Endothelial cell of umbilical vein (primary cell): ENCODE measurements at regions of chr3 and their contacts with region 1.

Region 1: DNA sequence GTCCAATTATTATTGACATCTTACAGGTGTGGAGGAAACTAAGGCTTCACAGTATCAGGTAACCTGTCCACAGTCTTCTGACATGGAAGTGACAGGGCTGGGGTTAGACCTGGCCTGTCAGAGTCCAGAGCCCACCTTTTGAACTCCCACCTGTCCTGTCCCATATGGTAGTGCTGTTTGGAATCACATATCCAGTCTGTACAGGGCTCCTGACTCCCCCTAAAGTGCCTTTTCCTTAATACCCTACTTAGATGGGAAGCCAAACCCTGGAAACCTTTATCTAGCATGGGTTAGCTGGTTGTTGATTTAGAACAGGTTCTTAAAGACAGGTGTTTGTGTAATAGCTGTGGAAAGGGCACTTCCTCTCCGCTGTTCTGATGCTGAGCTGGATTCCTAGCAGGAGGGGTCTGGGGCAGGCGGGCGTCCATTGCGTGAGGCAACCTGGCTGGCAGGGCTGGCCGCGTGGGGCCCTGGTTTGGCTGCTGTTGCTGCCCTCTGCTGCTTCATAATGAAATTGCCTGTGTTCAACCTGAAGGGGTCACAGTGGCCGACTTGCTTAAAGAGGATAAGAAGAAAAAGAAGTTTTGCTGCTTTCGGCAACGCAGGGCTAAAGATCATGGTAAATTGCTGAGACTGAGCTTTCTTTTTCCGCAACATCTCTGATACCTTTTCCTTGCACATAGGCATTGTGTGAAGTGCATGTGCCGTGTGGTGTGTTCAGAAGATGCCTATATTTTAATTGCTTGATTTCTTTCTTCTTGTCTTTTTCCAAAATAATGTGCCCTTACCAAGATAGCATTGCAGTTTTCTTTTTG is 136.2 kb downstream of the CHDH start:
- DNase-seq: peak; percentile 72
- H3K4me3 ChIP-seq: no peak overlapping the region
- H3K27ac ChIP-seq: no peak overlapping the region
- H3K4me1 ChIP-seq: no peaks in the 10 kb centered on the region
- H3K27me3 ChIP-seq: peaks cover 2 to 4% of the 10 kb centered on the region in 2 experiments
- CTCF ChIP-seq: peak; percentile 63 to 82
- POLR2A ChIP-seq: no peak

Region 2: DNA sequence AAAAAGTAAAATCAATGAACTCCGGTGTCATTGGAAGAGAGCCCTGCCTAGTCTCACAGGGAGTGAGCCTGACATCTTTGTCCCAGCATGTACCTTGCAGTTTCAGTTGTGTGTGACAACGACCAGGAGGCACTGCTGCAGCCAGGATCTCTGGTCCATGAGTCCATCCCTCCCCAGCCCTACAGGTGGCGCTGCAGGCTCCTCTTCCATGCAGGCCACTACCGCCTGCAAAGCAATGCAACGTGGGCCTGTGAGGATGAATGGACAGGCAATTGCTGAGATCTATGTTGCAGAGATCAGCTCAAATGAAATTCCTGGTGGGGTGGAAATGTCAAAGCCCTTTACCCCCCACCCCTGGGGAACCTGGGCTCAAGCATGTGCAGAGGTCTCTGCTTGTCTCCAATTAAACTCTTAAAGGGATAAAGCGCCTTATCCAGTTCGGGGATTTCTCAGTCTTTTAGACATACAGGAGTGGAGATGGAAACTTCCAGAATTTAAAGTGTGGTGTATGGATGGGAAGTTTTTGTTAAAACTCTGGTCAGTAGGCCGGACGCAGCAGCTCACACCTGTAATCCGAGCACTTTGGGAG is 490.1 kb before region 1 on chr3:
- CTCF ChIA-PET with region 1: interaction called, 11 read pairs
- POLR2A ChIA-PET with region 1: no interaction called
- dilution Hi-C with region 1: no loop called
- intact Hi-C with region 1: loop called (anchors 1 kb)
- DNase-seq: peak; percentile 81
- H3K4me3 ChIP-seq: no peak overlapping the region
- H3K27ac ChIP-seq: no peak overlapping the region
- H3K4me1 ChIP-seq: no peaks in the 10 kb centered on the region
- H3K27me3 ChIP-seq: no peaks in the 10 kb centered on the region
- CTCF ChIP-seq: peak; percentile 94 to 95
- POLR2A ChIP-seq: no peak

Region 3: DNA sequence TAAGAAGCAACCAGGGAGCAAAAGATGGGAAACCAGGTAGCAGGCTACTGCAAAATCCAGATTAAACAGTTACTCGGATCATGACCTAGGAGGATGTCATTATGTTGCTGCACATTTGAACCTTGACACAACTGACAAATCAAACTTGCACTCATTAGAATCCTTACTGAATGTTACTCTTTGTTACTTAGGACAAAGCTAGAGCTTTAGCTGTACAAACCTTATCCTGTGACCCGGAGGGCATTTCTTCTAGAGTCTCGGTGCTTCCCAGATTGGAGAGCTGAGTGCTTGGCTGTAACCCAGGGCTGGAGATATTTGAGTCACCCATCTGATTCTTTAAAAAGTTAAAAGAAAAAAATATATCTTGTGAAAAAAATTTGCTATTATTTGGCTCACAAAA is 406.1 kb before region 1 on chr3:
- CTCF ChIA-PET with region 1: interaction called, 7 read pairs
- POLR2A ChIA-PET with region 1: no interaction called
- dilution Hi-C with region 1: no loop called
- intact Hi-C with region 1: loop called (anchors 1 kb)
- DNase-seq: no peak
- H3K4me3 ChIP-seq: no peak overlapping the region
- H3K27ac ChIP-seq: no peak overlapping the region
- H3K4me1 ChIP-seq: no peaks in the 10 kb centered on the region
- H3K27me3 ChIP-seq: no peaks in the 10 kb centered on the region
- CTCF ChIP-seq: no peak
- POLR2A ChIP-seq: no peak

Region 4: DNA sequence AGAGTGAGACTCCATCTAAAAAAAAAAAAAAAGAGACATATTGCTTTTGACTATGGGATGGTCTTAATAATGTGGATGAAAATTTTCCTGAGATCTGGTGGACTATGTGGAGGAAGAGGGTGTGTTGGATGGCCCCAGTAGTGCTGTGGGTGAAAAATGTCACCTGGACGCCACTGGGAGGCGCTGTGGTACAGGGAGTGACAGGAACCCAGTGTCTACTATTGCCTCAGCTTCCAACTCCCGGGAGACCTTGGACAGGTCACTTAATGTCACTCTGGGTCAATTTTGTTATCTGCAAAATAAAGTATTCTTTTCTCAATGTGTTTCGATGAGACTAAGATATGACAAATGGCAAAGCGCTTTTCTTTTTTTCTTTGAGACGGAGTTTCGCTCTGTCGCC is 335.0 kb before region 1 on chr3:
- CTCF ChIA-PET with region 1: interaction called, 43 read pairs
- POLR2A ChIA-PET with region 1: no interaction called
- dilution Hi-C with region 1: no loop called
- intact Hi-C with region 1: loop called (anchors 1 kb)
- DNase-seq: peak; percentile 55
- H3K4me3 ChIP-seq: no peak overlapping the region
- H3K27ac ChIP-seq: no peak overlapping the region
- H3K4me1 ChIP-seq: no peaks in the 10 kb centered on the region
- H3K27me3 ChIP-seq: peaks cover 0 to 7% of the 10 kb centered on the region in 2 experiments
- CTCF ChIP-seq: peak; percentile 74 to 77
- POLR2A ChIP-seq: no peak

Region 5: DNA sequence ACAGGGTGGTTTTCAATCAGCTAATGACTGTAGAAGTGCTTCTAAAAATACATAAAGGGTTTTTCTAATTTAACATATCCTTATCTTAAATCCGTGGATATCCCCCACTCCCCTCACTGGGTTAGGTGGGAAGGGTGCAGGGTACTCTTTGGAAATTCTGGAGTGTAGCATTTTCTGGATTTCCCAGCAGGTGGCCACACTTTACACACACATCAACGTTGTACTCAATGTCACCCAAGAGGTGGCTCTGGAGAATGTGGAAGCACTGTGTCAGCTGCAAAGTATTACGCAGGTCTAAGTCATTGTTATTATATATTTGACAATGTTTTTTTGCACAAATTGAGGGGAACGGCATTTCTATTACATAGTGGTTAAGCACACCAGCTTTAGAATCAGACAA is 32.7 kb before region 1 on chr3:
- CTCF ChIA-PET with region 1: interaction called, 5 read pairs
- POLR2A ChIA-PET with region 1: no interaction called
- dilution Hi-C with region 1: no loop called
- intact Hi-C with region 1: loop called (anchors 2 kb)
- DNase-seq: no peak
- H3K4me3 ChIP-seq: no peak overlapping the region
- H3K27ac ChIP-seq: no peak overlapping the region
- H3K4me1 ChIP-seq: no peaks in the 10 kb centered on the region
- H3K27me3 ChIP-seq: no peaks in the 10 kb centered on the region
- CTCF ChIP-seq: no peak
- POLR2A ChIP-seq: no peak

Region 6: GRCh38 chr3:54014067-54014466 is 304.0 kb after region 1 on chr3:
- CTCF ChIA-PET with region 1: no interaction called
- POLR2A ChIA-PET with region 1: no interaction called
- dilution Hi-C with region 1: no loop called
- intact Hi-C with region 1: no loop called
- DNase-seq: no peak
- H3K4me3 ChIP-seq: no peak overlapping the region
- H3K27ac ChIP-seq: no peak overlapping the region
- H3K4me1 ChIP-seq: no peaks in the 10 kb centered on the region
- H3K27me3 ChIP-seq: no peaks in the 10 kb centered on the region
- CTCF ChIP-seq: no peak
- POLR2A ChIP-seq: no peak